ENCODE measurements at regions of chr6 and their contacts with region 1.

Region 1: GRCh38 chr6:2940010-2940850 is 31.1 kb downstream of the SERPINB6 start:
- DNase-seq: peak in 8 of 9 donors; percentile 70 to 90 (median 82)
- ATAC-seq: peak; percentile 81
- H3K4me3 ChIP-seq: peak overlapping the region; percentile 72
- H3K4me3 Mint-ChIP-seq: peak overlapping the region; percentile 81 to 94 (median 88)
- H3K27ac ChIP-seq: peak overlapping the region; percentile 81
- H3K27ac Mint-ChIP-seq: peak overlapping the region; percentile 93 to 100 (median 97)
- H3K4me1 ChIP-seq: peaks cover 27 to 76% of the 10 kb centered on the region in 2 donors
- H3K4me1 Mint-ChIP-seq: peaks cover 33 to 88% (median 79%) of the 10 kb centered on the region in 7 donors
- H3K27me3 ChIP-seq: no peaks in the 10 kb centered on the region
- H3K27me3 Mint-ChIP-seq: peaks cover 0 to 22% (median 0%) of the 10 kb centered on the region in 5 donors

Region 2: DNA sequence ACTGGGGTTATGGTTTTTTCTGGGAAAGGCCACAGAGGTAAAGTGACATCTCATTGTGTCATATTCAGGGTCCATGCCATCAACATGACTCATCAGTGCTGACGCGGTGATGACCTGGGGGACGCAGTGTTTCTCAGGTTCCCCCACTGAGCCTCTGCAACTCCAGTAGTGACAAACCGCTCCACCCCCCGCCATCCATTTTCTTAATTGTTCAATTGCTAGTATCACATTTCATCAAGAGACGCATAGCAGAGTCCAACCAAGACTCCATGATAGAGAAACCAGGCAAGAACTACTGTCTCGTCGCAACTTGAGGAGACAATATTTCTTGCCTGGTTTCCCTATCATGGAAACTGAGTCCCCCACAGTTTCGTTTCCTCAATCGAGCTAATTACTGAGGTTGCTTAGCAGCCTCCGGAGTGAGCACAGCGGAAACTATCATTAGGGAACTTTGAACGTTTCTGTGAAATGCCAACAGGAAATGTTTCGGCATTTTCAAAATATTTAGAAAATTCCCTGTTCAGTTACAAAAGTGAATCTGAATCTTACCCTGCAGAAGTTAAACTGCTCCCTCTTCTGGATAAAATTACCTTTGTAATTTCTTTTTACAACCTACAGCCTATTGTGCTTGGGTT is 86.4 kb before region 1 on chr6:
- CTCF ChIA-PET with region 1: interaction called, 3 read pairs
- POLR2A ChIA-PET with region 1: interaction called, 90 read pairs
- intact Hi-C with region 1: loop called in 1 of 2 experiments (anchors 1 kb)
- DNase-seq: peak in 5 of 9 donors; percentile 23 to 70 (median 40)
- ATAC-seq: peak; percentile 61
- H3K4me3 ChIP-seq: peak overlapping the region; percentile 53
- H3K4me3 Mint-ChIP-seq: peak overlapping the region; percentile 65 to 97 (median 78)
- H3K27ac ChIP-seq: peak overlapping the region; percentile 65
- H3K27ac Mint-ChIP-seq: peak overlapping the region; percentile 79 to 100 (median 98)
- H3K4me1 ChIP-seq: peaks cover 59 to 61% of the 10 kb centered on the region in 2 donors
- H3K4me1 Mint-ChIP-seq: peaks cover 42 to 74% (median 71%) of the 10 kb centered on the region in 7 donors
- H3K27me3 ChIP-seq: no peaks in the 10 kb centered on the region
- H3K27me3 Mint-ChIP-seq: no peaks in the 10 kb centered on the region

Region 3: DNA sequence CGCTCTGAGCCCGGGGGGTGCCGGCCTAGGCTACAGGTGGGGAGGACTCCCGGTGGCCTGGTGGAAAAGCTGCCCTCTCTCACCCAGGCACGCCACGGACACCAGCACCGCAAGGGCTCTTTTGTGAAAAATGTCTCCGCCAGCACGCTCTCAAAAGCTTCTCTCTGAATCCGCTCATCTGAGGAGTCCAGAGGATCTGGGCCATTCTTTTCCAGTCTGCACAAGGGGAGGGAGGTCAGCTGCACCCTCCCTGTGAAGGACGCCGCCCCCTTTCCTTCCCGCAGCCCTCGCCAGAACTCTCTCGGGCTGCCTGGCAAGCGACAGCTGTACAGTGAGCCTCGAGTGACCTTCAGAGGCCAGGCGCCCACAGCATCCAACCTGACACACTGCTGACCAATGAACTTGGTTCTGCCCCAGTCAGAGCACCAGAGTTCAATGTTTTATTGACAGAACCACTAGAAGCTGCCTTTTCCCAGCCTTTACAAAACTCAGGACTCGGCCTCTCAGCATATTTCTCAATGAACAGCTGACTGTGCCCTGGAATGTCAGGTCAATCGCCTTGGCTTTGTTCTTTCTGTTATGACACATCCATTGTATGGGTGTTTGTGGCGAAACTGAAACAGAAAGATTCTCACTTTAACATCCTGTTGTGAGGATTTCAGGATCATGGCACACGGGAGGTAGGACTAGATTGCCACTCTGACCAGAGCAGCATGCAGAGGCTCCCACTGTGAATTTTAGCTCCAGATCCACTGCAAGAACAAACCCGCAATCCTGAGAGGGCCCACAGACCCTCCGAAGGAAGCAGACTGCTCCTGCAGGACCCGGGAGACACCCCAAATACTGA is 63.8 kb before region 1 on chr6:
- CTCF ChIA-PET with region 1: no interaction called
- POLR2A ChIA-PET with region 1: interaction called, 10 read pairs
- intact Hi-C with region 1: no loop called
- DNase-seq: no peak
- ATAC-seq: peak; percentile 38
- H3K4me3 ChIP-seq: peak overlapping the region; percentile 50
- H3K4me3 Mint-ChIP-seq: peak overlapping the region; percentile 79 to 87 (median 84)
- H3K27ac ChIP-seq: peak overlapping the region; percentile 71
- H3K27ac Mint-ChIP-seq: peak overlapping the region; percentile 82 to 98 (median 91)
- H3K4me1 ChIP-seq: peaks cover 54 to 55% of the 10 kb centered on the region in 2 donors
- H3K4me1 Mint-ChIP-seq: peaks cover 63 to 83% (median 79%) of the 10 kb centered on the region in 7 donors
- H3K27me3 ChIP-seq: no peaks in the 10 kb centered on the region
- H3K27me3 Mint-ChIP-seq: no peaks in the 10 kb centered on the region

Region 4: DNA sequence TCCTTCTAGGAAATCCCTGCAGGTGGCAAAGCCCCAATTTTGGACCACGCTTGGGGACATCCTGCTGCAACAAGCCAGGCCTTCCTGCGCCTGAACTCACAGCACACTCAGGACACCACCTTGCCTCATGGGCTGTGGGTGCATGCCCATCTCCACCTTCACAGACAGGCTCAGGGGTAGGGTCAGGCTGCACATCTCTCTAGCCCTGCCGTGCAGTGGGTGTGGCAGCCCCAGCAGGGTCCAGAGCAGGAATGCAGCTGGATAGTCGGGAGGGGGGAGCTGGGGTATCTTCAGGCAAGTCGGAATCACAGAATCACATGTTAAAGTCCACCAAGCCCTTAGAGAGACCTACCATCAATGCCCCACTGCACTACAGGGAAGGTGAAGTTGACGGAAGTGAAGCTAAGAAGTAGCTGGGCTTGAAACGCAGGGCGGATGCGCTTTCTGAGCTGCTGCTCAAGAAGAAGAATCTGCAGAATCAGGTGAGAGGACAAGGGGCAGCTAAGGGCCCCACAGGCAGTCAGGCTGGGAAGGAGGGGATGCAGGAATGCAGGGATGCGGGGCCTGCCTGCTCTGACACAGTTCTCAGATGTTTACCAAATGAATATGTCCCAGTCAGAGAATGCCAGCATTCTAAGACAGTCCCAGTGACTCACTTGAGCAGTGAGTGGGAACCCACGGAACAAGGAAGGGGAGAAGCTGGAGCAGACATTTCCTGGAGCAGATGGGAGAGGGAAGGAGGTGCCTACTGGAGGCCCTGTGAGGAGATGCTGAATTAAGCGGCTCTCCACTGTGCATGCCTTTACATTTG is 19.9 kb after region 1 on chr6:
- CTCF ChIA-PET with region 1: no interaction called
- POLR2A ChIA-PET with region 1: interaction called, 14 read pairs
- intact Hi-C with region 1: loop called in 1 of 2 experiments (anchors 2 kb)
- DNase-seq: no peak
- ATAC-seq: no peak
- H3K4me3 ChIP-seq: no peak overlapping the region
- H3K4me3 Mint-ChIP-seq: no peak overlapping the region
- H3K27ac ChIP-seq: no peak overlapping the region
- H3K27ac Mint-ChIP-seq: peak overlapping the region in 6 of 9 donors; percentile 14 to 85 (median 45)
- H3K4me1 ChIP-seq: peaks cover 0 to 14% of the 10 kb centered on the region in 2 donors
- H3K4me1 Mint-ChIP-seq: peaks cover 3 to 68% (median 43%) of the 10 kb centered on the region in 7 donors
- H3K27me3 ChIP-seq: no peaks in the 10 kb centered on the region
- H3K27me3 Mint-ChIP-seq: peaks cover 0 to 7% (median 0%) of the 10 kb centered on the region in 5 donors

Region 5: DNA sequence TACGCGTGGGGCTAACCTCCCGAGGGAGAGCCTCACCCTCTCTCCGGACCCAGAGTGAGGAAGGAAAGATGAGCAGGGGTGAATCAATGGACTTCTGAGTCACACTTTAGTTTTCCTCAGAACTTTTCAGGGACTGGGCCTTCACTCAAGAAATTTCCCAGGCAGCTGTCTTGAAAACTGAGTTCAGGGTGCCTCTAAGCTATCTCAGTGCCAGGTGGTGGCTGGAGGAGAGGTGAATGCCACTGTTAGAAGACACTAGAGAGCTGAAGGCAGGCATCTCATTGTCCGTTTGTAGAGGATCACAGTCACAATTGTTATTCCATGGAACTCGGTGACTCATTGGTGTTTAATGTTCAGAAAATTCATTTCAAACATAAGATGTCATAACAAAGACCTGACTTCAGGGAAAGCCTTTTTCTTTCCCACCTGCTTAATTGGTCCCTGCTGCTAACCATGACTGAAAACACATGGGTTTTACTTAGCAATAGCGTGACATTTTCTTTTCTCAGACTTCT is 36.4 kb after region 1 on chr6:
- CTCF ChIA-PET with region 1: interaction called, 4 read pairs
- POLR2A ChIA-PET with region 1: interaction called, 33 read pairs
- intact Hi-C with region 1: loop called (anchors 1 to 2 kb)
- DNase-seq: no peak
- ATAC-seq: no peak
- H3K4me3 ChIP-seq: no peak overlapping the region
- H3K4me3 Mint-ChIP-seq: peak overlapping the region in 1 of 10 donors; percentile 59
- H3K27ac ChIP-seq: no peak overlapping the region
- H3K27ac Mint-ChIP-seq: no peak overlapping the region
- H3K4me1 ChIP-seq: peaks cover 7 to 16% of the 10 kb centered on the region in 2 donors
- H3K4me1 Mint-ChIP-seq: peaks cover 6 to 20% (median 17%) of the 10 kb centered on the region in 7 donors
- H3K27me3 ChIP-seq: no peaks in the 10 kb centered on the region
- H3K27me3 Mint-ChIP-seq: peaks cover 0 to 77% (median 4%) of the 10 kb centered on the region in 5 donors